HEK293 (cell line): ENCODE measurements at regions of chr1 and their contacts with region 1.

Region 1: DNA sequence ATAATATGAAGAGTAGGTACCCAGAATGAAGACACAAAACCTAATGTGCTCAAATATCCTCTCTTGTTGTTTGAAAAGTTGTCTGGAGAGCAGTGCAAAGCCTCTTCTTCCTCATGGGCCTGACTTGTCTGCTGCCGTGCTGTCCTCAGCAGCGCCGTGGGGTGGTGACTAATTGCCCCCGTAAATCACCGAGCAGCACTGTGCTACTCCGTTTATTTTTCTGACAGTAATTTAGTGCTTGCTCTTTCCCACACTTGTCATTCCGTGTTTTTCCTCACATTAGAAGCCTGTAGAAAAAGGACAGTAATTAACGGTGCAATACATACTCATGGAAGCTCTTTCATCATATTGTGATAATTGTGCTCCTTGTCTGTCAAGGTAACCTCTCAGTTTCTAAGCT is 114.8 kb upstream of the BARHL2 start:
- H3K4me3 ChIP-seq: no peak overlapping the region
- H3K27ac ChIP-seq: no peak overlapping the region
- H3K4me1 ChIP-seq: peaks cover 13% of the 10 kb centered on the region
- CTCF ChIP-seq: no peak

Region 2: DNA sequence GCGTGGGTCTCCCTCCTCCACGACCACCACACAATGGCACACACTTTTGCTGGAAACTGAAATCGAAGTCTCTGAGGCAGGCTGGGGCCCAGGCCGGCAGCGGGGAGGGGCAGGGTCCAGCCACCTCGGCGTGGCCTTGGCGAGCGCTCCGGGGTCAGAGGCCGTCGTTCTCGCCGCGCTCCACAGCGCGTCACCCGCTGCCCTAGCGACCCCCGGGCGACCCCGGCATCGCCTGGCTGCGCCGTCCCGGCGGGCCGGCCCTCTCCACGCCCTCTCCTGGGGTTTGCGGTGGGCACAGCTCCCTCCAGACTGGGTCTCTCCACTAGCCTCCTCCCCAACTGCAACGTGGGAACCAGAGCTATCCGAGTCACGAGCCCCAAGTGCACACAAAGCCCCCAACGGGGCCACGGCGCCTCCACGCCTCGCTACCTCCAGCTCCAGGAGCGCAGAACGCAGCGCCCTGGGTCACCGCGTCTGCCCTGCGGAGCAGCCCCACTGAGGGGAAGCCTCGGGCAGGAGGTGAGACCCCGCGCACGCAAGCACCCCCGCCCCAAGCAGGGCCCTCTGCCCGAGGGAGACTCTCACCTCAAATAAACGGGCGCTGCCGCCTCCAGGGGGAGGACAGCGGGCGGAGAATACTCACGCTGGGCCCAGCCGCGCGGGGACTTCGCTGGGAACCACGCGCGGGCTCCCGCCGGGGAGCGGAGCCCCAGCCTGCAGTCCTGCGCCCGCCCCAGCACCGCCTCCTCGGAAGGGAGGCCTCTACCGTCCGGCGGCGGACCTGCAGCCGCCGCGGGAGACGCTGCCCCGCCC is 19.2 kb after region 1 on chr1:
- CTCF ChIA-PET with region 1: interaction called, 11 read pairs
- POLR2A ChIA-PET with region 1: no interaction called
- H3K4me3 ChIP-seq: peak overlapping the region; percentile 81
- H3K27ac ChIP-seq: peak overlapping the region; percentile 78; the same call in 1 of the 2 replicates
- H3K4me1 ChIP-seq: no peaks in the 10 kb centered on the region
- CTCF ChIP-seq: peak; percentile 82

Region 3: GRCh38 chr1:91795591-91796389 is 963.9 kb after region 1 on chr1:
- CTCF ChIA-PET with region 1: no interaction called
- POLR2A ChIA-PET with region 1: no interaction called
- H3K4me3 ChIP-seq: no peak overlapping the region
- H3K27ac ChIP-seq: no peak overlapping the region
- H3K4me1 ChIP-seq: peaks cover 21% of the 10 kb centered on the region
- CTCF ChIP-seq: no peak